Activated naive CD4-positive, alpha-beta T cell treated with anti-CD3 and anti-CD28 coated beads for 36 hours (primary cell): ENCODE measurements at regions of chr3 and their contacts with region 1.

Region 1: GRCh38 chr3:32467333-32468070 is 35.1 kb downstream of the CMTM6 start:
- DNase-seq: peak; percentile 78
- H3K4me3 Mint-ChIP-seq: peak overlapping the region; percentile 20
- H3K27ac Mint-ChIP-seq: peak overlapping the region; percentile 54
- H3K4me1 Mint-ChIP-seq: peaks cover 42% of the 10 kb centered on the region
- H3K27me3 Mint-ChIP-seq: no peaks in the 10 kb centered on the region

Region 2: GRCh38 chr3:32238453-32239306 is 228.8 kb before region 1 on chr3 and contains the start of gene CMTM8:
- CTCF ChIA-PET with region 1: no interaction called
- intact Hi-C with region 1: loop called (anchors 5 kb)
- DNase-seq: peak; percentile 70
- H3K4me3 Mint-ChIP-seq: peak within 1 kb of the TSS; percentile 82
- H3K27ac Mint-ChIP-seq: no peak within 1 kb of the TSS
- H3K4me1 Mint-ChIP-seq: peaks cover 32% of the 10 kb centered on the region
- H3K27me3 Mint-ChIP-seq: peaks cover 2% of the 10 kb centered on the region
- total RNA-seq, gene CMTM8: 16.0 to 19.1 TPM

Region 3: GRCh38 chr3:32374788-32375595 is 92.5 kb before region 1 on chr3:
- CTCF ChIA-PET with region 1: interaction called, 110 read pairs
- intact Hi-C with region 1: loop called (anchors 1 kb)
- DNase-seq: peak; percentile 88
- H3K4me3 Mint-ChIP-seq: no peak overlapping the region
- H3K27ac Mint-ChIP-seq: peak overlapping the region; percentile 69
- H3K4me1 Mint-ChIP-seq: peaks cover 35% of the 10 kb centered on the region
- H3K27me3 Mint-ChIP-seq: no peaks in the 10 kb centered on the region

Region 4: GRCh38 chr3:32401556-32402081 is 65.9 kb before region 1 on chr3:
- CTCF ChIA-PET with region 1: interaction called, 37 read pairs
- intact Hi-C with region 1: loop called (anchors 1 kb)
- DNase-seq: peak; percentile 77
- H3K4me3 Mint-ChIP-seq: peak overlapping the region; percentile 92
- H3K27ac Mint-ChIP-seq: peak overlapping the region; percentile 99
- H3K4me1 Mint-ChIP-seq: peaks cover 74% of the 10 kb centered on the region
- H3K27me3 Mint-ChIP-seq: no peaks in the 10 kb centered on the region

Region 5: GRCh38 chr3:32414520-32415202 is 52.8 kb before region 1 on chr3:
- CTCF ChIA-PET with region 1: interaction called, 36 read pairs
- intact Hi-C with region 1: no loop called
- DNase-seq: peak; percentile 78
- H3K4me3 Mint-ChIP-seq: peak overlapping the region; percentile 40
- H3K27ac Mint-ChIP-seq: peak overlapping the region; percentile 94
- H3K4me1 Mint-ChIP-seq: peaks cover 81% of the 10 kb centered on the region
- H3K27me3 Mint-ChIP-seq: no peaks in the 10 kb centered on the region

Region 6: GRCh38 chr3:32432711-32433530 is 34.6 kb before region 1 on chr3:
- CTCF ChIA-PET with region 1: interaction called, 15 read pairs
- intact Hi-C with region 1: no loop called
- DNase-seq: peak; percentile 59
- H3K4me3 Mint-ChIP-seq: peak overlapping the region; percentile 76
- H3K27ac Mint-ChIP-seq: peak overlapping the region; percentile 99
- H3K4me1 Mint-ChIP-seq: peaks cover 84% of the 10 kb centered on the region
- H3K27me3 Mint-ChIP-seq: no peaks in the 10 kb centered on the region